Naive thymus-derived CD4-positive, alpha-beta T cell (primary cell): ENCODE measurements at regions of chr15 and their contacts with region 1.

Region 1: GRCh38 chr15:81106560-81106959 is 27.5 kb upstream of the CFAP161 start:
- DNase-seq: peak in 8 of 9 donors; percentile 2 to 43 (median 31)
- ATAC-seq: peak; percentile 54
- H3K4me3 ChIP-seq: no peak overlapping the region
- H3K4me3 Mint-ChIP-seq: no peak overlapping the region
- H3K27ac ChIP-seq: no peak overlapping the region
- H3K27ac Mint-ChIP-seq: peak overlapping the region in 1 of 9 donors; percentile 73
- H3K4me1 ChIP-seq: no peaks in the 10 kb centered on the region
- H3K4me1 Mint-ChIP-seq: peaks cover 0 to 12% (median 0%) of the 10 kb centered on the region in 7 donors
- H3K27me3 ChIP-seq: no peaks in the 10 kb centered on the region
- H3K27me3 Mint-ChIP-seq: peaks cover 11 to 66% (median 20%) of the 10 kb centered on the region in 5 donors

Region 2: DNA sequence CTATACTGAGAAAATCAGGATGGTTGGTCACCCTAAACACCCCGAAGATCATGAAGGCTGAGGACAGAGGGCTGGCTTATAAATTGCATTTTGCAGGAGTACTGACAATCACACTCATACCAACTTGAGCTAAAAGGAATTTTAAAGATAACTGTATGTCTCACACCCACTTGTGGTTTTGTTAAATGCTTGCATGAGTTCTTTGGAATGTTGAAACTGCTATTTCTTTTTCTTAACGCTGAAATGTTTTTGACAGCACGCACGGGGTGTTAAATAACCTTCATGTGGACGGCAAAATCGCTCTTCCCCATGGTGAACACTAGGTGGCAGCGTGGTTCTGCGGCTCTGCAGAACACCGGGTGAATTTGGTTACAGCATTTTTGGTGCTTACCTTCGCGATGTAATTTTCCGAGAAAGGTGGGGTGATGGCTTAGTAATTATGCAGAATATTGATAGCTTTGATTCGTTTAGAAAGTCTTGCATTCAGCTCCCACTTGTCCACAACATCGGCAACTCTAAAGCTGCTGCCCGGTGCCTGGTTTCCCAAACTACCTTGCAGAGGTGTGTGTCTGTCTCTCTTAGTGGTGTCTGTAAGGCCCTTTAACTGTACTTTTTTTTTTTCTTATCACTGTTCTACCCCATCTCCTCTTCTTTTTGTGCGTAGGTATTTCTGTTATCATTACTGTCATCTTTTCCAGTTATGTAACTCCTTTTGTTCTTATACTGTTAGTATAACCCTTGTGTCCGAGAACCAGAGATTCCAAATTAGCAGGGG is 650.7 kb before region 1 on chr15:
- CTCF ChIA-PET with region 1: interaction called, 4 read pairs
- POLR2A ChIA-PET with region 1: no interaction called
- intact Hi-C with region 1: loop called (anchors 1 to 5 kb)
- DNase-seq: peak; percentile 19 to 62 (median 50)
- ATAC-seq: peak; percentile 78
- H3K4me3 ChIP-seq: no peak overlapping the region
- H3K4me3 Mint-ChIP-seq: no peak overlapping the region
- H3K27ac ChIP-seq: no peak overlapping the region
- H3K27ac Mint-ChIP-seq: no peak overlapping the region
- H3K4me1 ChIP-seq: no peaks in the 10 kb centered on the region
- H3K4me1 Mint-ChIP-seq: no peaks in the 10 kb centered on the region
- H3K27me3 ChIP-seq: no peaks in the 10 kb centered on the region
- H3K27me3 Mint-ChIP-seq: peaks cover 0 to 10% (median 6%) of the 10 kb centered on the region in 5 donors

Region 3: DNA sequence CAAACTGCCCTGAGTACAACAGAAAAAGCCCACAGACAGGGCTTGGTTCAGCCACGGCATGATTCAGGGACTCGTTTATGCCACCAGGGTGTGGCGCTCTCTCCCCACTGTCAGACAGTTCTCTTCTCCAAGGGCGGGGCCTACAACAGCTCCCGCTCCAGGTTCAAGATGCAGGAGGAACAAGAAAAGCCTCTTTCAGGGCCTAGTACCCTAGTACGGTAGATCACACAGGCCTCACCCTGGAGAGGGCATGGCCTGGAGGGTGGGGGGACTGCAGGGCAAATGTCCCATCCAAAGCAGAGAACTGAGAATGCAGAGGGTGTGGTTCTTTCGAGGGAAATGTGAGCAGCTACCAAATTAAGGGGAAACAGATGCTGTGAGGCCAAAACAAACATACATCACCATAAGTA is 128.9 kb before region 1 on chr15:
- CTCF ChIA-PET with region 1: interaction called, 7 read pairs
- POLR2A ChIA-PET with region 1: no interaction called
- intact Hi-C with region 1: loop called (anchors 1 kb)
- DNase-seq: peak in 3 of 9 donors; percentile 25 to 38 (median 31)
- ATAC-seq: peak; percentile 77
- H3K4me3 ChIP-seq: no peak overlapping the region
- H3K4me3 Mint-ChIP-seq: no peak overlapping the region
- H3K27ac ChIP-seq: no peak overlapping the region
- H3K27ac Mint-ChIP-seq: peak overlapping the region in 7 of 9 donors; percentile 16 to 70 (median 28)
- H3K4me1 ChIP-seq: no peaks in the 10 kb centered on the region
- H3K4me1 Mint-ChIP-seq: peaks cover 25 to 57% (median 54%) of the 10 kb centered on the region in 7 donors
- H3K27me3 ChIP-seq: no peaks in the 10 kb centered on the region
- H3K27me3 Mint-ChIP-seq: no peaks in the 10 kb centered on the region

Region 4: DNA sequence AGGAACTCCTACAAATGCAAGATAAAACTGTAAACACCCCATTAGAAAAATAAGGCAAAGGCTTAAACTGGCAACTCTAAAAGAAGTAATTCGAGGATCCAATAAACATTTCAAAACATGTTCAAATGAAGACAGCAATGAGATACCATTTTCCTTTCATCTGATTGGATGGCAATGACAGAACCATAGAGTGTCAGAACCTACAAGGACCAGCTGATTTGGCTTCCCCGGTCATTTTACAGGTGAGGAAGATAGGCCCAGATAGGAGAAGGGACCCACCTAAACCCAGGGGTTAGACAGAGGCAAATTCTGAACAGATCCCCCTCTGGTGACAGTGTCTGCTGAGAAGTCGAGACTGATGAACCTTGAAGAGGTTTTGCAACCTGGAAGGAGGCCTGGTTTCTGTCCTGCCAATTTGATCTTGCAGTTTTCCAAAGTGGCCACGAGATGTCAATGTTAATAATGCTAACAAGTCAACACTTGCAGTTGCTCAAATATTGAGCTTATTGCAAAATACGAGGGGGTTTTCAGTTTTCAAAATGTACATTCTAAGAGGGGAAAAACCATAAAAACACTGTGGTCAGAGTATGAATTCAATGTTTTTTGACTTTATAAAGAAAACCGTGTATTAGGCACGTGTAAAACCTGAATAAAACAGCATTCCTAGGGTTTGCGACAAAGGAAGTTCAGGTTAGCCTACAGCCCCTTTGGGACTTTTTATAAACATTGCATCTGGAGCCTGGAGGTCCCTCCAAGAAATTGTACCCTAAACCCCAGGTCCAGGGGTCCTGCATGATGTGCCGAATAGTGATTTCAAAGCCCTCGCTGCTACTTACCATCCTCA is 49.0 kb after region 1 on chr15:
- CTCF ChIA-PET with region 1: no interaction called
- POLR2A ChIA-PET with region 1: no interaction called
- intact Hi-C with region 1: loop called in 1 of 2 experiments (anchors 2 kb)
- DNase-seq: peak in 6 of 9 donors; percentile 12 to 44 (median 32)
- ATAC-seq: no peak
- H3K4me3 ChIP-seq: no peak overlapping the region
- H3K4me3 Mint-ChIP-seq: no peak overlapping the region
- H3K27ac ChIP-seq: no peak overlapping the region
- H3K27ac Mint-ChIP-seq: peak overlapping the region in 1 of 9 donors; percentile 2
- H3K4me1 ChIP-seq: no peaks in the 10 kb centered on the region
- H3K4me1 Mint-ChIP-seq: peaks cover under 1 to 19% (median 5%) of the 10 kb centered on the region in 7 donors
- H3K27me3 ChIP-seq: no peaks in the 10 kb centered on the region
- H3K27me3 Mint-ChIP-seq: peaks cover 0 to 13% (median under 1%) of the 10 kb centered on the region in 5 donors

Region 5: DNA sequence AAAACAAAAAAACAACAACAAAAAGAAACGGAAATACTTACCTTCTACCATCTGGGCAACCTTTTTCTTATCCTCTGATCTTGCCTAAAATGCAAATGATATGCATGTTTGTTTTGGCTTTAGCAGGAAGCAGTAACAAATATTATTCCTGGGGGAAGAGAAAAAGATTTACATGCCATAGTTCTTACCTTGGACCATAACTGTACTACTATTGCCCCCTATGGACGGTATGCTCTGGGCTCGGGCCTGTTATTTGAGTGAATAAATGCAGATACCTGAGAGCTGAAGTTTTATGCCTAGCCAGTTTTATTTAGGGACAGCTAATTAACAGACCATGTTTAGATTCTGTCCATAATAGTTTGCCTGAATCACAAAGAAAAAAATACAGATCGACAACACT is 230.0 kb after region 1 on chr15:
- CTCF ChIA-PET with region 1: no interaction called
- POLR2A ChIA-PET with region 1: no interaction called
- intact Hi-C with region 1: loop called in 1 of 2 experiments (anchors 2 kb)
- DNase-seq: peak in 6 of 9 donors; percentile 32 to 49 (median 37)
- ATAC-seq: peak; percentile 70
- H3K4me3 ChIP-seq: no peak overlapping the region
- H3K4me3 Mint-ChIP-seq: no peak overlapping the region
- H3K27ac ChIP-seq: no peak overlapping the region
- H3K27ac Mint-ChIP-seq: peak overlapping the region in 4 of 9 donors; percentile 3 to 68 (median 17)
- H3K4me1 ChIP-seq: peaks cover 0 to 3% of the 10 kb centered on the region in 2 donors
- H3K4me1 Mint-ChIP-seq: peaks cover 4 to 22% (median 12%) of the 10 kb centered on the region in 7 donors
- H3K27me3 ChIP-seq: no peaks in the 10 kb centered on the region
- H3K27me3 Mint-ChIP-seq: peaks cover 0 to 9% (median 0%) of the 10 kb centered on the region in 5 donors

Region 6: DNA sequence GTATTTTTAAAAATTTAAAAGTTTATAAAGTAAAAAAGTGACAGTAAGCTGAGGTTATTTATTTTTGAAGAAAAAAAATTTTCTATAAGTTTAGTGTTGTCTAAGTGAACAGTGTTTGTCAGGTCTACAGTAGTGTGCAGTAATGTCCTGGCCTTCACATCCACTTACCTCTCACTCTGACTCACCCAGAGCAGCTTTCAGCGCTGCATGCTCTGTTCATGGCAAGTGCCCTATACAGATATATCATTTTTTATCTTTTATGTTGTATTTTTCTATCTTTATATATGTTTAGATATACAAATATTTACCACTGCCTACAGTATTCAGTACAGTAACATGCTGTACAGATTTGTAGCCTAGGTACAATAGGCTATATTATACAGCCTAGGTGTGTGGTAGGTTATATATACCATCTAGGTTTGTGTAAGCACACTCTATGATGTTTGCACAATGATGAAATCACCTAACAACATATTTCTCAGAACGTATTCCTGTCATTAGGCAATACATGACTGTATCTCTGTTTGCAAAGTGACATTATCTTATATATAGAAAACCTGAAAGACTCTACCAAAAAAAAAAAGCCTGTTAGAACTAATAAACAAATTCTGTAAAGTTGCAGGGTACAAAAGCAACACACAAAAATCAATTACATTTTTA is 343.4 kb after region 1 on chr15:
- CTCF ChIA-PET with region 1: no interaction called
- POLR2A ChIA-PET with region 1: no interaction called
- intact Hi-C with region 1: no loop called
- DNase-seq: no peak
- ATAC-seq: no peak
- H3K4me3 ChIP-seq: no peak overlapping the region
- H3K4me3 Mint-ChIP-seq: no peak overlapping the region
- H3K27ac ChIP-seq: no peak overlapping the region
- H3K27ac Mint-ChIP-seq: no peak overlapping the region
- H3K4me1 ChIP-seq: no peaks in the 10 kb centered on the region
- H3K4me1 Mint-ChIP-seq: peaks cover 0 to 4% (median 0%) of the 10 kb centered on the region in 7 donors
- H3K27me3 ChIP-seq: no peaks in the 10 kb centered on the region
- H3K27me3 Mint-ChIP-seq: peaks cover under 1 to 26% (median 10%) of the 10 kb centered on the region in 5 donors